SK-N-SH (cell line): ENCODE measurements at regions of chr1 and their contacts with region 1.

Region 1: GRCh38 chr1:233304489-233305102 is 9.1 kb upstream of the PCNX2 start:
- DNase-seq: peak; percentile 29
- H3K4me3 ChIP-seq: no peak overlapping the region
- H3K27ac ChIP-seq: no peak overlapping the region
- H3K4me1 ChIP-seq: no peaks in the 10 kb centered on the region
- H3K27me3 ChIP-seq: no peaks in the 10 kb centered on the region
- CTCF ChIP-seq: peak; percentile 78
- EP300 ChIP-seq: no peak
- RAD21 ChIP-seq: peak; percentile 92

Region 2: DNA sequence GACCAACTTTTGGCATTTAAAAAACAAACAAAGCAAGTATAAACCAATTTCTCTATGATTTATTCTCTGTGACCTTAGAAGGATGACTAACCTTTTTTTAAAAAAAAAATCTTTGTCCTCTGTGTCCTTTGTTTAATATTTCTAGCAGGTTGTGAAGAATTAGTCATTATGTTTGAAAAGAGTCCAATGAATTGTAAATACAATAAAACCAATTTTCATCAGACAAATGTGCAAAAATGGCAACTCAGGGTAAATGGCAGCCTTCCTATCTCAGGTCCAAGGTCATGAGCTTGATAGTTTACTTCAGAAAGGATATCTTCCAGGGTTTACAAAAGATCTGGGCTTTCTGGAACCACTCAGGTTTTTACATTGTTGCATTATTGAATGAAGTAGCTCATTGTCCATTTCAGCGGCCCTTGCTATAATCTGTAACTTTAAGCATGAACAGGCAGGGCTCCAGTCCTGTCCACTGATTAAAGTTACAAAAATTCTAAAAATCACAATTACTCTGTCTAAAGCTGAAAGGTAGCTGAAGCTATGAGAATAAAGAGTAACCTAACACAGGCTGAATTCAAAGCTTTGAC is 11.2 kb after region 1 on chr1:
- CTCF ChIA-PET with region 1: interaction called, 11 read pairs
- POLR2A ChIA-PET with region 1: no interaction called
- DNase-seq: no peak
- H3K4me3 ChIP-seq: no peak overlapping the region
- H3K27ac ChIP-seq: no peak overlapping the region
- H3K4me1 ChIP-seq: peaks cover 0 to 3% of the 10 kb centered on the region in 2 experiments; a peak in 2 of 4 replicates
- H3K27me3 ChIP-seq: no peaks in the 10 kb centered on the region; the same call in 1 of the 2 replicates
- CTCF ChIP-seq: no peak
- EP300 ChIP-seq: no peak
- RAD21 ChIP-seq: no peak

Region 3: DNA sequence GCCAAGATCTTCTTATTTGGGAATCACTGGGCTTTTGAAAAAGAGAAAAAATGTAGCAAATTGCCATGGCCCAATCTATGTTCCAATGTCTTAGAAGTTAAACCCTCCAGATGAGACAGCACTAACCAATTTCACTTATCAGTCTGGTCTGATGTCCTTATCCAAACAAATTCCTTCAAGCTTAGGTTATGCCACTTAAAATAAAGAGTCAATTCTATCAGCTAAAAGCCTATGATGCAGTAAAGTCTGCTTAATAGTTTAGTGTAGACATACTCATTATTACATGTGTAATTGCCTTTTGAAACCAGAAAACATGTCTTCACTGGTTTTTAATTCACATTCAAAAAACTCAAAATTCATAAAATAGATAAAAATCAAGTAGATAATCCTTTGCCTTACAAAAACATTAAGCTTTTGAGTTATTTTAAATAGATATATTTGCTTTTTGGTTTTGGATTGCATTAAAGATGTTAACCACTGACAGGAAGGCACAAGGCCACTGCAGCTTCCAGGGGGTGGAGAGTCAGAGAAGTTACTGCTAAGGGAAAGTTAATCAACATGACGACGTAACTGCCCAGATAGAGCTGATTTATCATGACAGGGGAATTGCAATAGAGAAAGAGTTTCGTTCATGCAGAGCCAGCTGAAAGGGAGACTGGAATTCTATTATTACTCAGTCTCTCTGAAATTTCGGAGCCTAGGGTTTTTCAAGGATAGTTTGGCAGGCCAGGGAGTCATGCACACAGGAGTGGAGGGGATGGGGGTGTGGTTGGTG is 129.0 kb after region 1 on chr1:
- CTCF ChIA-PET with region 1: no interaction called
- POLR2A ChIA-PET with region 1: no interaction called
- DNase-seq: no peak
- H3K4me3 ChIP-seq: no peak overlapping the region
- H3K27ac ChIP-seq: no peak overlapping the region
- H3K4me1 ChIP-seq: no peaks in the 10 kb centered on the region
- H3K27me3 ChIP-seq: no peaks in the 10 kb centered on the region
- CTCF ChIP-seq: no peak
- EP300 ChIP-seq: no peak
- RAD21 ChIP-seq: no peak